Activated naive CD4-positive, alpha-beta T cell treated with anti-CD3 and anti-CD28 coated beads for 36 hours (primary cell): ENCODE measurements at regions of chr12 and their contacts with region 1.

Region 1: GRCh38 chr12:12611512-12612306 is at the start of gene CREBL2:
- DNase-seq: peak; percentile 90
- H3K4me3 Mint-ChIP-seq: peak within 1 kb of the TSS; percentile 88
- H3K27ac Mint-ChIP-seq: peak within 1 kb of the TSS; percentile 99
- H3K4me1 Mint-ChIP-seq: peaks cover 59% of the 10 kb centered on the region
- H3K27me3 Mint-ChIP-seq: no peaks in the 10 kb centered on the region
- total RNA-seq, gene CREBL2: 15.6 to 16.1 TPM

Region 2: GRCh38 chr12:12070674-12071656 is 540.7 kb before region 1 on chr12 and contains the start of gene BCL2L14:
- CTCF ChIA-PET with region 1: no interaction called
- intact Hi-C with region 1: loop called (anchors 5 kb)
- DNase-seq: peak; percentile 52
- H3K4me3 Mint-ChIP-seq: peak within 1 kb of the TSS; percentile 85
- H3K27ac Mint-ChIP-seq: peak within 1 kb of the TSS; percentile 90
- H3K4me1 Mint-ChIP-seq: peaks cover 36% of the 10 kb centered on the region
- H3K27me3 Mint-ChIP-seq: no peaks in the 10 kb centered on the region
- total RNA-seq, gene BCL2L14: 19.4 to 21.8 TPM

Region 3: DNA sequence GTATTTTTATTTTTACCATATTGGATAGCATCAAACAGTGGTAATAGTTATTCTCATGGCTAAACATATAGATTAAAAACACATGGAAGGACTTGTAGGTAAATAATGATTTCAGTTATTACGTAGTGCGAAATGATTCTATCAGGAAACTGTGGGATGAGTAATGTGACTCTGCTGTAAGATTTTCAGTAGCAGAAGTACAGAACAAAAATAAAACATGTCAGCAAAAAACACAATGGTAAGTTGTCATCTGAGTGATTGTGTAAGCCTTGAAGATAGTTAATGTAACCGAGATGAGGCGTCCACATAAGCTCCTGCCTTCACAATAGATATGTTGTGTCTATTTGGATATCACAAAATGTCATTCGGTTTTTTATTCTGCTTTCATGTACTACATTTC is 155.1 kb before region 1 on chr12:
- CTCF ChIA-PET with region 1: interaction called, 3 read pairs
- intact Hi-C with region 1: loop called (anchors 1 kb)
- DNase-seq: no peak
- H3K4me3 Mint-ChIP-seq: peak overlapping the region; percentile 17
- H3K27ac Mint-ChIP-seq: peak overlapping the region; percentile 76
- H3K4me1 Mint-ChIP-seq: peaks cover 51% of the 10 kb centered on the region
- H3K27me3 Mint-ChIP-seq: no peaks in the 10 kb centered on the region

Region 4: GRCh38 chr12:12622418-12622817 is 10.7 kb after region 1 on chr12:
- CTCF ChIA-PET with region 1: interaction called, 5 read pairs
- intact Hi-C with region 1: loop called (anchors 1 kb)
- DNase-seq: no peak
- H3K4me3 Mint-ChIP-seq: peak overlapping the region; percentile 10
- H3K27ac Mint-ChIP-seq: peak overlapping the region; percentile 68
- H3K4me1 Mint-ChIP-seq: peaks cover 64% of the 10 kb centered on the region
- H3K27me3 Mint-ChIP-seq: no peaks in the 10 kb centered on the region

Region 5: GRCh38 chr12:12696562-12697383 is 85.1 kb after region 1 on chr12:
- CTCF ChIA-PET with region 1: no interaction called
- intact Hi-C with region 1: loop called (anchors 1 kb)
- DNase-seq: peak; percentile 93
- H3K4me3 Mint-ChIP-seq: peak overlapping the region; percentile 97
- H3K27ac Mint-ChIP-seq: peak overlapping the region; percentile 98
- H3K4me1 Mint-ChIP-seq: peaks cover 38% of the 10 kb centered on the region
- H3K27me3 Mint-ChIP-seq: no peaks in the 10 kb centered on the region

Region 6: GRCh38 chr12:12724661-12725545 is 113.2 kb after region 1 on chr12:
- CTCF ChIA-PET with region 1: no interaction called
- intact Hi-C with region 1: loop called (anchors 1 kb)
- DNase-seq: peak; percentile 94
- H3K4me3 Mint-ChIP-seq: peak overlapping the region; percentile 85
- H3K27ac Mint-ChIP-seq: peak overlapping the region; percentile 98
- H3K4me1 Mint-ChIP-seq: peaks cover 51% of the 10 kb centered on the region
- H3K27me3 Mint-ChIP-seq: no peaks in the 10 kb centered on the region

Region 7: GRCh38 chr12:12934556-12934955 is 322.8 kb after region 1 on chr12:
- CTCF ChIA-PET with region 1: no interaction called
- intact Hi-C with region 1: no loop called
- DNase-seq: no peak
- H3K4me3 Mint-ChIP-seq: no peak overlapping the region
- H3K27ac Mint-ChIP-seq: no peak overlapping the region
- H3K4me1 Mint-ChIP-seq: no peaks in the 10 kb centered on the region
- H3K27me3 Mint-ChIP-seq: no peaks in the 10 kb centered on the region